ENCODE measurements at regions of chr11 and their contacts with region 1.

Region 1: DNA sequence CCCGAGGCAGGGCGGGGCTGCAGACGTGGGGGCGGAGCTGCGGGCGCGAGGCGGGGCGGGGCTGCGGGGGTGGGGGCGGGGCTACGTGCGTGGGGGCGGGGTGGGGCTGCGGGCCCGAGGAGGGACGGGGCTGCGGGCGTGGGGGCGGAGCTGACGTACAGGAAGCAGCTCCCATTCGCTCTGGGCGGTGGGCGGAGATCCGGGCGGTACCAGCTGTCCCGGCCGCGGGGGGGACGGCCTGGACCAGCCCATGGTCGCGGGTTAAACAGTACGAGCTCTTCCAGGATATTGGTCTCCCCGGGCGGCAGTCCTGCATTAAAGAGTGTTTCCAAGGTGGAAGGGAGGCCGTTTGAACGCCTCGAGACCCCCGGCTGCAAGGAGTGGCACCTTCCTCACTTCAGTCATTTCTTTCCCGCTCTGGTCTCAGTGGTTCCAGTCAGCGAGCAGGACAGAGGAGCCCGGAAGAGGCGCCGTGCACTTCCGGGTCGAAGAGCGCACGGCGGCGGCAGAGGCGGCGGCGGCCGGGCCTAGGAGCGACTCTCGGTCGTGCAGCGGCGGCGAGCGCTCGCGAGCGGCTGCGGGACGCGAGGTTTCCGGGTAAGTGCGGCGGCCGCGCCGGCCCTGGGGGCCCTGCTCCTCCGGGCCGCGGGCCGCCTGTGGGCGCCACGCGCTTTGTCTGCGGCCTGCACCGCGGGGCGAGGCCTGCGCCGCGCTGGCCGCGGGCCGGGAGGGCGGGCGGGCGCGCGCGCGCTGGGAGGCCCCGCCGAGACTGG is at the start of gene PHRF1:
- DNase-seq: peak; percentile 85
- ATAC-seq: peak; percentile 88
- H3K4me3 ChIP-seq: peak within 1 kb of the TSS; percentile 97
- H3K27ac ChIP-seq: peak within 1 kb of the TSS; percentile 88
- H3K4me1 ChIP-seq: peaks cover 24% of the 10 kb centered on the region
- H3K27me3 ChIP-seq: no peaks in the 10 kb centered on the region
- CTCF ChIP-seq: no peak
- total RNA-seq, gene PHRF1: 41.4 and 52.4 TPM in 2 replicates

Region 2: GRCh38 chr11:477052-477715 is 99.0 kb before region 1 on chr11:
- CTCF ChIA-PET with region 1: no interaction called
- POLR2A ChIA-PET with region 1: no interaction called
- intact Hi-C with region 1: no loop called
- DNase-seq: no peak
- ATAC-seq: no peak
- H3K4me3 ChIP-seq: no peak overlapping the region
- H3K27ac ChIP-seq: no peak overlapping the region
- H3K4me1 ChIP-seq: no peaks in the 10 kb centered on the region
- H3K27me3 ChIP-seq: no peaks in the 10 kb centered on the region
- CTCF ChIP-seq: no peak

Region 3: DNA sequence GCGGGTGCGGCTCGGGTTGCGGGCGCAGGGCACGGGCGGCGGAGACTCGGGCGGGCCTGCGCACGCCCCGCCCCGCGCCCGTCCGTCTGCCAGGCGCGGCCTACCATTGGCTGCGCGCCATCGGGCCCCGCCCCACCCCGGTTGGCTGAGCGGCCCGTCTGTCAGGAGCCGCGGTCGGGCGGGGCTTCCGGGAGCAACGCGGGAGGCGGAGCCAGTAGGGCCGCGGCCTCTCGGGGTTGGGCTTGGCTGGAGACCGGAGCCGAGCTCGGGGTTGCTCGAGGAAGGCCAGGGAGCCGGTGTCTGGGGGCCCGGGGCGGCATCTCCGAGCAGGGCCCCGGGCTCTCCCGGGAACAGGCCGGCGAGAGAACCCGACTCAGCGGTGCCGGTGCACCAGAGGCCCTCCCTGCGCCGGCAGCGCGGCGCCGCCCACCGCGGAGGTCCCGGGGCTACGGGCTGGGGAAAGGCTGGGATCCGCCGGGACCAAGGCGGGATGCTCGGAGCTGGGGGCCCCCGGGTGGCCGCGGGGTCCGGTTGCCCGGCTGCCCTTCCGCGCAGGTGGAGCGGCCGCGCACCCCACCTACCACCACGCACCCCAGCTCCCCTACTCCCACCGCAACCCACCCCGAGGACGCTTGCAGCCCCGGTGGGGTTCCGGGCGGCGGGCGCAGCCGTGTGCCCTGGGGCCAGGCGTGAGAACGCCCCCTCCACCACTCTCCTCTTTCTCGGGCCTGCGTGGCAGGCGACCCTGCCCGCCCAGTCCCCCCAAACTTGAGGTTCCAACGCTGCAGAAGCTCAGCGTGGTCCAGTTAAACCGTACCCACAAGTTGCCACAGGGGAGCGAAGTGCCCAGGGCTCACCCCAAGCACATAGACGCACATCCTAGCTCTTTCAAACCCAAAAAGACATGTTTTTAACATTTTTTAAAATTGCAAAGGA is 40.4 kb before region 1 on chr11 and contains the start of gene HRAS:
- CTCF ChIA-PET with region 1: no interaction called
- POLR2A ChIA-PET with region 1: interaction called, 7 read pairs
- intact Hi-C with region 1: loop called (anchors 2 kb)
- DNase-seq: peak; percentile 94
- ATAC-seq: peak; percentile 77
- H3K4me3 ChIP-seq: peak within 1 kb of the TSS; percentile 89
- H3K27ac ChIP-seq: peak within 1 kb of the TSS; percentile 63
- H3K4me1 ChIP-seq: peaks cover 17% of the 10 kb centered on the region
- H3K27me3 ChIP-seq: no peaks in the 10 kb centered on the region
- CTCF ChIP-seq: no peak
- total RNA-seq, gene HRAS: 128 and 167 TPM in 2 replicates

Measured in PC-3 (cell line).